CD14-positive monocyte (primary cell): ENCODE measurements at regions of chr1 and their contacts with region 1.

Region 1: DNA sequence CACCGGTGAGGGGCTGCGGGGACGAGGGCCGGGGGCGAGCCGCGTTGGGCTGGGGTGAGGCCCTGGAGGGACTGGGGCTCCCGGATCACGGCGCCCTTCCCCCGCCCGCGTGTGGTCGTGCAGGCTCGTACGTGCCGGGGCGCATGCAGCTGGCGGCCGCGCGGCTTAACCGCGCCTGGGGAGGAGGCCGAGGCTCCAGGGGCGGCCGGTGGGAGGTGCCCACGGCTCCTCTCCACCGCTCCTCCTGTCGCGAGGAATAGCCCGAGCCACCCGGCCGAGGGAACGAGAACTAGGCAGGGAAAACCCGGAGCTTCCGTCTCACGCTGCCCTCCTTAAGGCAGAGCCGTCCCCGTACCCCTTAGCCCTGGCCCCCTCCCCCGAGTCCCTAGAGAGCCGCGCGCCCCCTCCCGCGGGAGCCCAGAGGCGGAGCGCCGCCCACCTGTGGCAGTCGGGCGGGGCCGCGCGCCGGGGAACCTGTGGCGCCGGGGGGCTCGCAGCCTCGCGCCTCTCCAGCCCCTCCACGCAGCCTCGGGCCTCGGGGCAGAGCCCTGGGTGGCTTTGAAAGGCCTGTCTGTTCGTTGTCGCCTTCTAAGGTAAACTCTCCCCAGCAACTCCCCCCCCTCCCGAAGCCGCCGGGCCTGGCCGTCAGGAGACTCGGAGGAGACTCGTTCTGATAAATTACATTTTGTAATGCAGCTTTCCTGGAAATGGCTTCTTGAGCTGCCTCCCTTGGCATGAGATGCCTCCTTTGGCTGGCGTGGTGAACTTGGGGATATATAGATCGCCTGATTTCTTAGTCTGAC is 746 bp downstream of the AK4 start:
- DNase-seq: peak in 2 of 3 donors; percentile 27 to 35
- H3K4me3 ChIP-seq: peak overlapping the region; percentile 72 to 91 (median 87)
- H3K4me3 Mint-ChIP-seq: peak overlapping the region; percentile 92 to 93
- H3K27ac ChIP-seq: no peak overlapping the region
- H3K27ac Mint-ChIP-seq: peak overlapping the region in 3 of 7 donors; percentile 50 to 80 (median 53)
- H3K4me1 ChIP-seq: peaks cover 13 to 21% of the 10 kb centered on the region in 2 donors
- H3K4me1 Mint-ChIP-seq: peaks cover 18% of the 10 kb centered on the region
- H3K27me3 ChIP-seq: peaks cover 4 to 25% of the 10 kb centered on the region in 2 donors
- H3K27me3 Mint-ChIP-seq: peaks cover 17 to 37% (median 23%) of the 10 kb centered on the region in 3 donors
- CTCF ChIP-seq: no peak

Region 2: GRCh38 chr1:65083263-65083896 is 65.4 kb before region 1 on chr1:
- intact Hi-C with region 1: loop called in 1 of 2 experiments (anchors 10 kb)
- DNase-seq: peak; percentile 45 to 88 (median 45)
- H3K4me3 ChIP-seq: no peak overlapping the region
- H3K4me3 Mint-ChIP-seq: peak overlapping the region in 1 of 2 donors; percentile 16
- H3K27ac ChIP-seq: peak overlapping the region in 1 of 2 donors; percentile 64
- H3K27ac Mint-ChIP-seq: peak overlapping the region; percentile 3 to 86 (median 50)
- H3K4me1 ChIP-seq: peaks cover 19 to 29% of the 10 kb centered on the region in 2 donors
- H3K4me1 Mint-ChIP-seq: peaks cover 38% of the 10 kb centered on the region
- H3K27me3 ChIP-seq: no peaks in the 10 kb centered on the region
- H3K27me3 Mint-ChIP-seq: peaks cover 0 to 6% (median 3%) of the 10 kb centered on the region in 3 donors
- CTCF ChIP-seq: no peak

Region 3: GRCh38 chr1:65209005-65209885 is 60.5 kb after region 1 on chr1:
- intact Hi-C with region 1: loop called in 1 of 2 experiments (anchors 5 kb)
- DNase-seq: peak; percentile 30 to 53 (median 39)
- H3K4me3 ChIP-seq: no peak overlapping the region
- H3K4me3 Mint-ChIP-seq: no peak overlapping the region
- H3K27ac ChIP-seq: no peak overlapping the region
- H3K27ac Mint-ChIP-seq: peak overlapping the region in 3 of 7 donors; percentile 28 to 75 (median 66)
- H3K4me1 ChIP-seq: peaks cover 21 to 24% of the 10 kb centered on the region in 2 donors
- H3K4me1 Mint-ChIP-seq: peaks cover 29% of the 10 kb centered on the region
- H3K27me3 ChIP-seq: no peaks in the 10 kb centered on the region
- H3K27me3 Mint-ChIP-seq: no peaks in the 10 kb centered on the region
- CTCF ChIP-seq: peak; percentile 75

Region 4: GRCh38 chr1:65412984-65413375 is 264.2 kb after region 1 on chr1:
- intact Hi-C with region 1: no loop called
- DNase-seq: no peak
- H3K4me3 ChIP-seq: no peak overlapping the region
- H3K4me3 Mint-ChIP-seq: no peak overlapping the region
- H3K27ac ChIP-seq: no peak overlapping the region
- H3K27ac Mint-ChIP-seq: no peak overlapping the region
- H3K4me1 ChIP-seq: no peaks in the 10 kb centered on the region
- H3K4me1 Mint-ChIP-seq: no peaks in the 10 kb centered on the region
- H3K27me3 ChIP-seq: no peaks in the 10 kb centered on the region
- H3K27me3 Mint-ChIP-seq: peaks cover 0 to 2% (median 0%) of the 10 kb centered on the region in 3 donors
- CTCF ChIP-seq: no peak